Posterior vena cava (tissue), 2 donors: ENCODE measurements at regions of chr6 and their contacts with region 1.

Region 1: GRCh38 chr6:5507131-5507681 is 245.9 kb downstream of the FARS2 start:
- DNase-seq: no peak

Region 2: GRCh38 chr6:5764401-5764955 is 257.3 kb after region 1 on chr6:
- intact Hi-C with region 1: loop called in 1 of 2 experiments (anchors 10 kb)
- DNase-seq: no peak

Region 3: GRCh38 chr6:6169141-6169540 is 661.9 kb after region 1 on chr6:
- intact Hi-C with region 1: no loop called
- DNase-seq: no peak